ENCODE measurements at regions of chr3 and their contacts with region 1.

Region 1: DNA sequence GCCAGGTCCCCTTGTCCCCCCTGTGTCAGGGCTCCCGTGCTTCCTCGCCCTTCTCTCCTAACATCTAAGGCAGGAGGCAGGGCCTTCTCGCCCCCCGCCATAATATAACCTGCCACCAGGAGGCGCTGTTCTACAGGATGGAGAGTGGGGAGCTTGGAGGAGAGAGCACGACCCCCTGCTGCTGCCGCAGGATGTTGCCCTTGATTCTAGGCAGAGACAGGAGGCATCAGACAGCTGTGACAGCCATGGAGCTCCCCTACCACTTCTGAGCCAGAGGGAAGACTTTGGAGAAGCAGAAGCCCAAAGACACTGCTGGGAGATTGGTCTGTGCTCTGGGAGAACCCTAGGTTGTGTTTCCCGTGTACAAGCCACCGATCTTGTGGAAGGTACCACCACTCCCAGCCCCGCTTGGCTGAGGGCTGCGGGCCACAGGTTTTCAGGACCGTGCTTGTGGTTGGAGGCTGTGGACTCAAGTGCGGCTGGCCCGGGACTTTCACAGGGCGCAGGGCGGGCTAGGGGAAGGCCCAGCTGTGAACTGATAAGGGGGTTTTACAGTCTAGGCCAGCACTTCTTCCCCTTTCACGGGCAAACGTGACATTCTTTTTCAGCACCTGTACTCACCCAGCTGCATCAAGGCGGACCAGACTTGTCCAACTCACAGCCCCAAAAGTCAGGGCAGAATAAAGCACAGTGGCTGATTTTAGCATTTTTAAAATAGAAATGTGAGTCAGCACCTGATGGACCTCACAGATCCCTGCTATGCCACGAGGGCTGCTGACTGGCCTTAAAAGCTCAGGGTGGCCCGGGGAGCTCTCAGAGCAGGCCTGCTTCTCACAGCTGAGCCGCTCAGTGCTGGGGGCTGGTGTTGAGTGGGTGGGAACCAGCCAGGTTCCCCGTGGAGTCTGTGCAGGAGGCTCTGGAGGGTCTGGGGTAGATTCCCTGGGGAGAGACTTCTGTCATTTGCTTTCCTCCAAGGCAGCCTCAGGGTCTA is 2.6 kb upstream of the TIGIT start:
- DNase-seq: peak; percentile 99
- ATAC-seq: peak; percentile 92
- H3K4me3 Mint-ChIP-seq: no peak overlapping the region
- H3K27ac Mint-ChIP-seq: no peak overlapping the region
- H3K4me1 Mint-ChIP-seq: peaks cover 19% of the 10 kb centered on the region
- H3K27me3 Mint-ChIP-seq: no peaks in the 10 kb centered on the region
- CTCF ChIP-seq: peak; percentile 98

Region 2: GRCh38 chr3:114152519-114153151 is 138.6 kb before region 1 on chr3:
- CTCF ChIA-PET with region 1: interaction called, 24 read pairs
- POLR2A ChIA-PET with region 1: no interaction called
- DNase-seq: peak; percentile 90
- ATAC-seq: peak; percentile 65
- H3K4me3 Mint-ChIP-seq: peak overlapping the region; percentile 52
- H3K27ac Mint-ChIP-seq: no peak overlapping the region
- H3K4me1 Mint-ChIP-seq: peaks cover 73% of the 10 kb centered on the region
- H3K27me3 Mint-ChIP-seq: peaks cover 3% of the 10 kb centered on the region; the same call in 1 of the 2 replicates
- CTCF ChIP-seq: peak; percentile 65

Region 3: GRCh38 chr3:114362815-114363214 is 71.6 kb after region 1 on chr3:
- CTCF ChIA-PET with region 1: interaction called, 13 read pairs
- POLR2A ChIA-PET with region 1: no interaction called
- DNase-seq: no peak
- ATAC-seq: peak; percentile 44; the same call in 1 of the 2 replicates
- H3K4me3 Mint-ChIP-seq: no peak overlapping the region
- H3K27ac Mint-ChIP-seq: no peak overlapping the region
- H3K4me1 Mint-ChIP-seq: peaks cover 29% of the 10 kb centered on the region
- H3K27me3 Mint-ChIP-seq: no peaks in the 10 kb centered on the region
- CTCF ChIP-seq: no peak

Region 4: GRCh38 chr3:114370537-114371174 is 79.5 kb after region 1 on chr3:
- CTCF ChIA-PET with region 1: interaction called, 10 read pairs
- POLR2A ChIA-PET with region 1: no interaction called
- DNase-seq: peak; percentile 44
- ATAC-seq: peak; percentile 98
- H3K4me3 Mint-ChIP-seq: no peak overlapping the region
- H3K27ac Mint-ChIP-seq: no peak overlapping the region
- H3K4me1 Mint-ChIP-seq: peaks cover 14% of the 10 kb centered on the region
- H3K27me3 Mint-ChIP-seq: no peaks in the 10 kb centered on the region
- CTCF ChIP-seq: peak; percentile 62

Region 5: DNA sequence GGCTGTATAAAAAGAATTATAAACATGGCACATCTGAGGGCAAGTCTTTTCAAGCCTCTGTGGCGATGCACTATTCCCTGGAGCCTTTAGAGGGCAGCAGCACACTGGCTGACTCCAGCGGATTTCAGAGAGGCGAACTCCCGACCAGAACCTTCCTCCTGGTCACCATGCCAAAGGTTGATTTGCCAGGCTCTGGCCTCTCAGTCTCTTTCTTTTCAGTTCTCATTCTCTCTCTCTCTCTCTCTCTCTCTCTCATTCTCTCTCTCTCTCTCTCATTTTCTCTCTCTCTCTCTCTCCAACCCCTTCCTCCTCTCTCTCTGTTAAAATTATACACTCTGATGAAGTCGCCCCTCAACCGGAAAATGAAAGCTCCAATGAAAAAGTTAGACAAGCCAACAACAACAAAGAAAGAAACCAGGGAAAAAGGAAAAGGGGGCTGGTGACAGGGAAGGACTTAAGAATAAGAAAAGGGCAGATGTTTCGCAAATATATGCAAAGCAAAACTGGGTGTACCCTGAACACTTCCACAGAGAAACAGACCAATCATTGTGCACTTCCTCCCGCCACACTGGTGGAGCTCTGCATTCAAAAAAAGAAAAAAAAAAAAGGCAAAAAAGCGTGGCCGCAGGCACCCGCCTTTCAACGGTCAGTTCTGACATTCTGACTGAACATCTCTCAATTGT is 92.8 kb after region 1 on chr3:
- CTCF ChIA-PET with region 1: interaction called, 13 read pairs
- POLR2A ChIA-PET with region 1: no interaction called
- DNase-seq: peak; percentile 77
- ATAC-seq: peak; percentile 95
- H3K4me3 Mint-ChIP-seq: no peak overlapping the region
- H3K27ac Mint-ChIP-seq: no peak overlapping the region
- H3K4me1 Mint-ChIP-seq: peaks cover 7% of the 10 kb centered on the region
- H3K27me3 Mint-ChIP-seq: no peaks in the 10 kb centered on the region
- CTCF ChIP-seq: peak; percentile 76

Region 6: GRCh38 chr3:114408736-114409670 is 117.8 kb after region 1 on chr3:
- CTCF ChIA-PET with region 1: interaction called, 15 read pairs
- POLR2A ChIA-PET with region 1: no interaction called
- DNase-seq: peak; percentile 13
- ATAC-seq: peak; percentile 69
- H3K4me3 Mint-ChIP-seq: peak overlapping the region; percentile 38; the same call in 1 of the 2 replicates
- H3K27ac Mint-ChIP-seq: no peak overlapping the region
- H3K4me1 Mint-ChIP-seq: peaks cover 62% of the 10 kb centered on the region
- H3K27me3 Mint-ChIP-seq: no peaks in the 10 kb centered on the region
- CTCF ChIP-seq: no peak

Region 7: GRCh38 chr3:114418724-114419543 is 127.7 kb after region 1 on chr3:
- CTCF ChIA-PET with region 1: interaction called, 23 read pairs
- POLR2A ChIA-PET with region 1: interaction called, 3 read pairs
- DNase-seq: no peak
- ATAC-seq: peak; percentile 90
- H3K4me3 Mint-ChIP-seq: no peak overlapping the region
- H3K27ac Mint-ChIP-seq: no peak overlapping the region
- H3K4me1 Mint-ChIP-seq: peaks cover 12% of the 10 kb centered on the region
- H3K27me3 Mint-ChIP-seq: no peaks in the 10 kb centered on the region
- CTCF ChIP-seq: peak; percentile 69